PC-3 (cell line): ENCODE measurements at regions of chr19 and their contacts with region 1.

Region 1: GRCh38 chr19:9140159-9140874 is at the start of gene ZNF317:
- DNase-seq: peak; percentile 97
- ATAC-seq: peak; percentile 91
- H3K4me3 ChIP-seq: peak within 1 kb of the TSS; percentile 88
- H3K27ac ChIP-seq: peak within 1 kb of the TSS; percentile 36
- H3K4me1 ChIP-seq: peaks cover 13% of the 10 kb centered on the region; the same call in 1 of the 2 replicates
- H3K27me3 ChIP-seq: no peaks in the 10 kb centered on the region
- CTCF ChIP-seq: no peak
- total RNA-seq, gene ZNF317: 34.7 and 41.2 TPM in 2 replicates

Region 2: GRCh38 chr19:9205501-9206113 is 65.3 kb after region 1 on chr19:
- CTCF ChIA-PET with region 1: interaction called, 4 read pairs
- POLR2A ChIA-PET with region 1: no interaction called
- intact Hi-C with region 1: loop called (anchors 1 kb)
- DNase-seq: peak; percentile 89
- ATAC-seq: peak; percentile 94
- H3K4me3 ChIP-seq: peak overlapping the region; percentile 54
- H3K27ac ChIP-seq: no peak overlapping the region
- H3K4me1 ChIP-seq: no peaks in the 10 kb centered on the region
- H3K27me3 ChIP-seq: no peaks in the 10 kb centered on the region
- CTCF ChIP-seq: peak; percentile 84

Region 3: GRCh38 chr19:9309139-9309973 is 169.0 kb after region 1 on chr19 and contains the start of gene ZNF699:
- CTCF ChIA-PET with region 1: no interaction called
- POLR2A ChIA-PET with region 1: no interaction called
- intact Hi-C with region 1: loop called (anchors 2 kb)
- DNase-seq: peak; percentile 100
- ATAC-seq: peak; percentile 79
- H3K4me3 ChIP-seq: peak within 1 kb of the TSS; percentile 97
- H3K27ac ChIP-seq: peak within 1 kb of the TSS; percentile 88
- H3K4me1 ChIP-seq: peaks cover 12% of the 10 kb centered on the region
- H3K27me3 ChIP-seq: no peaks in the 10 kb centered on the region
- CTCF ChIP-seq: no peak
- total RNA-seq, gene ZNF699: 30.9 and 36.0 TPM in 2 replicates

Region 4: GRCh38 chr19:9435279-9436268 is 295.3 kb after region 1 on chr19 and contains the start of gene ZNF266:
- CTCF ChIA-PET with region 1: no interaction called
- POLR2A ChIA-PET with region 1: no interaction called
- intact Hi-C with region 1: loop called (anchors 10 kb)
- DNase-seq: peak; percentile 97
- ATAC-seq: peak; percentile 90
- H3K4me3 ChIP-seq: peak within 1 kb of the TSS; percentile 85
- H3K27ac ChIP-seq: peak within 1 kb of the TSS; percentile 41
- H3K4me1 ChIP-seq: peaks cover 7% of the 10 kb centered on the region; the same call in 1 of the 2 replicates
- H3K27me3 ChIP-seq: no peaks in the 10 kb centered on the region
- CTCF ChIP-seq: peak; percentile 46
- total RNA-seq, gene ZNF266: 31.9 and 32.8 TPM in 2 replicates

Region 5: GRCh38 chr19:9621156-9622037 is 481.1 kb after region 1 on chr19 and contains the start of gene ZNF561:
- CTCF ChIA-PET with region 1: no interaction called
- POLR2A ChIA-PET with region 1: no interaction called
- intact Hi-C with region 1: loop called (anchors 1 kb)
- DNase-seq: peak; percentile 79
- ATAC-seq: peak; percentile 83
- H3K4me3 ChIP-seq: peak within 1 kb of the TSS; percentile 86
- H3K27ac ChIP-seq: peak within 1 kb of the TSS; percentile 73
- H3K4me1 ChIP-seq: no peaks in the 10 kb centered on the region
- H3K27me3 ChIP-seq: no peaks in the 10 kb centered on the region
- CTCF ChIP-seq: no peak
- total RNA-seq, gene ZNF561: 20.1 and 23.3 TPM in 2 replicates

Region 6: GRCh38 chr19:9785367-9786331 is 645.3 kb after region 1 on chr19:
- CTCF ChIA-PET with region 1: no interaction called
- POLR2A ChIA-PET with region 1: no interaction called
- intact Hi-C with region 1: loop called (anchors 1 kb)
- DNase-seq: peak; percentile 97
- ATAC-seq: peak; percentile 76
- H3K4me3 ChIP-seq: peak overlapping the region; percentile 73
- H3K27ac ChIP-seq: peak overlapping the region; percentile 75
- H3K4me1 ChIP-seq: peaks cover 23% of the 10 kb centered on the region
- H3K27me3 ChIP-seq: no peaks in the 10 kb centered on the region
- CTCF ChIP-seq: no peak

Region 7: GRCh38 chr19:9796113-9796773 is 655.9 kb after region 1 on chr19:
- CTCF ChIA-PET with region 1: no interaction called
- POLR2A ChIA-PET with region 1: no interaction called
- intact Hi-C with region 1: loop called (anchors 1 kb)
- DNase-seq: peak; percentile 98
- ATAC-seq: peak; percentile 56
- H3K4me3 ChIP-seq: peak overlapping the region; percentile 30; the same call in 1 of the 2 replicates
- H3K27ac ChIP-seq: no peak overlapping the region
- H3K4me1 ChIP-seq: peaks cover 16% of the 10 kb centered on the region
- H3K27me3 ChIP-seq: no peaks in the 10 kb centered on the region
- CTCF ChIP-seq: peak; percentile 98